Posterior vena cava (tissue), 2 donors: ENCODE measurements at regions of chr2 and their contacts with region 1.

Region 1: DNA sequence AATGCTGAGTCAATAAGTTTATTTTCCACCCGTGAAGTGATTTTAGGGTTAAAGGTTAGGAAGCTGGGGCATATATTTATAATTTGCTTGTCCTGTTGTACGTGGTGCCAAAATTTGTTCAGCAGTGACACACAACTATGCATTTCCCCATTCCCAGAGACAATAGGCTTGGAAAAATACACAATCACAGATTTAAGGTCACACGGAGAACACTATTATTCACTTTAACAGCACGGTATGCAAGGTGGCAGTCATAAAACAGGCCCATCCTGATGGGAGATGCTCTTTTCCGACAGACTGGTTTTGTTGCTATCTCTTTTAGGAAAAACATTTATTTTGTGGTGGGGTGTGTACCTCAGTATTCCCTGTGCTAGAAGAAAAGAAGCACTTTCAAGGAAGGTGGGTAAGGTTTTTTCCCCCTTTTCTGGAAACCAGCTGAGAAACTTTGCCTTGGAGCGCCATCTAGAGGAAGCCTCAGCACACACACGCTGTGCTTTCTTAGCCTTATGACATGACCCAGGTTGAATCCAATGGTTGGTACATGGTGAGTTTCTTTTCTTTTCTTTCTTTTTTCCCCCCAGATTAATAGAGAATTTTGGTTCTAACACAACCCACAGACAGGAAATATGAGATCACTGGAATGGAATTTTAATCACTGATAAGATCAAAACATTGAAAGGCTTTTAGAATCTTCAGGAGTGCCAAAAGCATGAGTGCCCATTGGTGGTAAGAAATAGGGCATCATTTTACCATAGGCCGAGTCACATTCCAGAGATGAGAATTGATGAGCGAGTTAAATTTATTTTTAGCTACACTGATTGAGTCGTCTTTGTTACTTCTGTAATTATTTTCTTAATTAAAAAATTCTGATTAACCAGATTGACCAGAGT is 332.1 kb downstream of the AGPS start:
- DNase-seq: no peak

Region 2: DNA sequence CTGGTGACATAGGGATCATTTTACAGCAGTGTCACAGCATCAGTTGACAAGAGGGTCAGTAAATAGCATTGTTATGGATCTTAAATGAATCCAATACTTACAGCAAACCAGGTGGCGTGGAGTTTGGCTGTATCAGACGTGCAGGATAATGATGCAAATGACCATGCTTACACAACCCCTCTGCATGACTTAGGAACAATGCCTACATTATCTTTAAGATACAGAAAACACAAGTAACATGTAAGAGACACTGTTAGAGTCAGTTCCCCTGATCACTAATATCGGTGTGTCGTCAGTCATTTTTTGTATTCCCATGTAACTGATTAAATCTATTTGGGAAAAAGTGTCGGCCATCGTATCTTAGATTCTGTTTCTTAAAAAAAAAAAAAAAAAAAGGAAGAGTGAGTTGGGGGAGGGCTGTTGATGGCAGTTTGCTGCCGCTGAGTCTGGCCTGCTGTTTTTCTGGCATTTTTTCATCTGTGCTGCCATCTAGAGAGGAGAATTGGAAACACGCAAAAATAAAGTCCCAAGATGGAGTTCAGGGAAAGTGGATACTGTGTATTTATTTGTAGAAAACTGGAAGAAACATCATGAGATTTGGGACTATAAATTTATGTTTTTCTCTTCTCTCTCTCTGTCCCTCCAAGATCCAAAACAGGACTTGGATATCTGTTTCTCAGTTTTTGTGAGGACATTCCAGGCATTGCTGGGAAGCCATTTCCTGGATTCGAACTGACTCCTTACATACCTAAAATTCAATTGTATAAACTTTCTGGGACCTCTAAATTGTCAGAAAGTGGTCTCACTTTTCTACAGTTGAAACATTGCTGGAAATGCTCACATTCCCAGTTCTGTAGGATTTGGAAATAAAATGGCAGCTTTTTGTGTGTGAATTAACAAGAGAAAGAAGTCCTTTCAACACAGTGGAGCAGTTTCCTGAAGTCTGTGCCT is 392.3 kb before region 1 on chr2:
- intact Hi-C with region 1: loop called in 1 of 2 experiments (anchors 10 kb)
- DNase-seq: no peak

Region 3: DNA sequence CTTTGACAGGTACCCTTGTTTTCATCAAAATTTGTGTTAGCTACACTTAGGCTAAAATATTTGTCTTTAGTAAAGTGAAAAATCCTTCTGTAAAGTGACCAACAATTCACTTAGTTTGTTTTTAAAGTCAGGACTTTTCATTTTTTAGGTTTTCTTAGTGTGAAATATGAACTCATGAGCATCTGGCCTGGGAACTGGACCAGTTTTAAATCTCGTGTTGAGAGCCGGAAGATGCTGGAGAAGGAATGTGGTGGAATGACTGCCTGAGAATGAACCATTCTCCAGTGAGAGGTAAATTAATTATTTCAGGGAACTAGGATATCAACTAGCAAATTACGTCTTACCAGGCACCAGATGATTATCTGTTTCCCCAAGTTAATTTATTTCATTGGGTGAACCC is 26.4 kb before region 1 on chr2:
- intact Hi-C with region 1: no loop called
- DNase-seq: no peak